A673 (cell line): ENCODE measurements at regions of chr12 and their contacts with region 1.

Region 1: DNA sequence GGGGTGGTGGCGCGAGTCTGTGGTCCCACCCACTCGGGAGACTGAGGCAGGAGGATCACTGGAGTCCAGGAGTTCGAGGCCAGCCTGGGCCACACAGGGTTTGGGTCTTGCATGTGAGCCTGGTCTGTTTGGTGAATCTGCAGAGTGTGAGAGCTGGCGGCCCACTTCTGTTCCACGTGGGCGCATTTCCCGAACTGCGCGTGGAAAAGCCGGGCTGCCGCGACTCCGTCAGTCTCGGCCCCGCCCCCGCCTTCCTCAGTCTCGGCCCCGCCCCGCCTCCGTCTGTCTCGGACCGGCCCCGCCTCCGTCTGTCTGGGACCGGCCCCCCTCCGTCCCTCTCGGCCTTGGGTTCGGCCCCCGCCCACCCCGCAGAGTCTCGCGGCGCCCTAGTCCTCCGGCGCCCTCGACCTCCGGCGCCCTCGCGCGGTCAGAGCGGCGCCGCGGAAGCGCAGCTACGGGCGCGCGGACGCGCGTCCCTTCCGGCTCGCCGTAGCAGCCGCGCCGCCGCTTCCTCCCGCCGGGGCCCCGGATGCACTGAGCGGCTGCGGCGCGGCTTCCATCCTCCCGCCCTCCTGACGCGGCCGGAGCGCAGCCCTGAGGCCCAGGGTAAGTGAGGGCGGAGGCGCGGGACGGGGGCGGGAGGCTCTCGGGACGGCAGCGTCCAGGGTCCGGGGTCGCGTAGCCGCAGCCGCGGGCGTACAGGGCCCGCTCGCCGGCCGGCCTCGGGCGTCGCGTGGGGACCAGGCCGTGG is at the start of gene EP400:
- DNase-seq: peak; percentile 97
- H3K4me3 ChIP-seq: peak within 1 kb of the TSS; percentile 97
- H3K27ac ChIP-seq: peak within 1 kb of the TSS; percentile 92
- H3K4me1 ChIP-seq: peaks cover 4% of the 10 kb centered on the region
- H3K27me3 ChIP-seq: no peaks in the 10 kb centered on the region
- CTCF ChIP-seq: peak; percentile 51
- total RNA-seq, gene EP400: 80.1 and 91.4 TPM in 2 replicates

Region 2: DNA sequence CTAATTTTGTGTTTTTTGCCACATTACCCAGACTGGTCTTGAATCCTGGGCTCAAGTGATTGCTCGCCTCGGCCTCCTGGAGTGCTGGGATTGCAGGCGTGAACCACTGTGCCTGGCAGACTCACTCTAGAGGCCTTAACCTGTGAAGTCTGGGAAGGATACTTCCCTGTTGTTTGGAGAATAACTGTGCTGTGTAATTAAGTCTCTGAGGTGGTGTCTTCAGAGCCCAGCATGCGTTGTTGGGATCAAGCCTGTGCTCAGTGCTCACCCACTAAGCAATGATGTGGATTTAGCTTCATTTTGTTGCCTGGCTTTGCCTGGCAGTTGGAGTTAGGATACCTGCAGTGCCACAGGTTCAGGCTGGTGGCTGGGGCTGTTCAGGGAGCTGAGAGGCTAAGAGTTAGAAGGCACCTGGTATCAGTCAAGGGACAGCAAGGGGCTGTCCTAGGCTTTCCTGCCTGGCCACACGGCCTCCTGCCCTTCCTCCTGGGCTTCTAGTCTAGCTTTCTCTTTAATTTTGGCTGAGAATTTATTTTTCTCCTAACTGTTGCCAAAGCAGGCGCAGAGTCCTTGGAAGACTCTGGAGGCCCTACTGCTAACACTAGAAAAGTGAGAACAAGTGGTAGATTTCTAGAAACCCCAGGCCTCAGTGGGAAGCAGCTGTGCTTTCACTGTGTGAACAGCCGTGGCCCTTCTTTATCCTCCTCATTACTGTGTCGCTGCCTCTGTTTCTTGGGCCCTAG is 38.6 kb after region 1 on chr12:
- CTCF ChIA-PET with region 1: no interaction called
- POLR2A ChIA-PET with region 1: no interaction called
- intact Hi-C with region 1: loop called (anchors 5 kb)
- DNase-seq: no peak
- H3K4me3 ChIP-seq: no peak overlapping the region
- H3K27ac ChIP-seq: peak overlapping the region; percentile 82
- H3K4me1 ChIP-seq: peaks cover 56% of the 10 kb centered on the region
- H3K27me3 ChIP-seq: no peaks in the 10 kb centered on the region
- CTCF ChIP-seq: no peak

Region 3: DNA sequence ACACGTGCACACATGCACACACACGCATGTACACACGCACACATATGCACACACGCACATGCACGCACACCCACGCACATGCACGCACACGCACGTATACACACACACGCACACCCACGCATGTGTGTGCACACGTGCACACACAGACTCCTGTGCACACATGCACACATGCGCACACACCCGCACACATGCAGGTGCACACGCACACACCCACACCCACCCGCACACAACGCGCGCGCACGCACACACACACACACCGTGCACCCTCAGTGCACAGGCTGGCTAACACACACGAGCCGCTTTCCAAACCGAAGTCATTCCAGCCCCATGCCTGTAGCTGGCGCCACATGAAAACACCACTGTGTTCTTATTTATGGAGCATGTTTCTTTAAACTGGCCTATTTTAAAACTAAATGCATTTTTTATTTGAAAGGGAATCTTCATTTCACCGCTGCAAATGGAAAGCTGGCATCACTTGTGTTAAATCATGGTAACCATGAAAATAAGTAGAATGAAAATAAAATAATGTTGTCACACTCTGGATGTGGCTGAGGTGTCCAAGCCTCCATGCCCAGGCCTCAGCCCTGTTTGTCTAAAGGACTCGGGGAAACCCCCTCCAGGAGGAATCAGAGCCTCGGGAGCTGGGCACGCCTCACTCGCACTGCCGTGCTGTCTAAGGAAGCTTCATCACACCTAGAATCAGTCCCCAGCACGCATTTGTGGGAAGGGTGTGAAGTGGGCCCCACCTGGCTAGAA is 334.6 kb after region 1 on chr12:
- CTCF ChIA-PET with region 1: no interaction called
- POLR2A ChIA-PET with region 1: no interaction called
- intact Hi-C with region 1: no loop called
- DNase-seq: peak; percentile 45
- H3K4me3 ChIP-seq: no peak overlapping the region
- H3K27ac ChIP-seq: no peak overlapping the region
- H3K4me1 ChIP-seq: no peaks in the 10 kb centered on the region
- H3K27me3 ChIP-seq: no peaks in the 10 kb centered on the region
- CTCF ChIP-seq: peak; percentile 68